K562 (cell line): ENCODE measurements at regions of chr5 and their contacts with region 1.

Region 1: DNA sequence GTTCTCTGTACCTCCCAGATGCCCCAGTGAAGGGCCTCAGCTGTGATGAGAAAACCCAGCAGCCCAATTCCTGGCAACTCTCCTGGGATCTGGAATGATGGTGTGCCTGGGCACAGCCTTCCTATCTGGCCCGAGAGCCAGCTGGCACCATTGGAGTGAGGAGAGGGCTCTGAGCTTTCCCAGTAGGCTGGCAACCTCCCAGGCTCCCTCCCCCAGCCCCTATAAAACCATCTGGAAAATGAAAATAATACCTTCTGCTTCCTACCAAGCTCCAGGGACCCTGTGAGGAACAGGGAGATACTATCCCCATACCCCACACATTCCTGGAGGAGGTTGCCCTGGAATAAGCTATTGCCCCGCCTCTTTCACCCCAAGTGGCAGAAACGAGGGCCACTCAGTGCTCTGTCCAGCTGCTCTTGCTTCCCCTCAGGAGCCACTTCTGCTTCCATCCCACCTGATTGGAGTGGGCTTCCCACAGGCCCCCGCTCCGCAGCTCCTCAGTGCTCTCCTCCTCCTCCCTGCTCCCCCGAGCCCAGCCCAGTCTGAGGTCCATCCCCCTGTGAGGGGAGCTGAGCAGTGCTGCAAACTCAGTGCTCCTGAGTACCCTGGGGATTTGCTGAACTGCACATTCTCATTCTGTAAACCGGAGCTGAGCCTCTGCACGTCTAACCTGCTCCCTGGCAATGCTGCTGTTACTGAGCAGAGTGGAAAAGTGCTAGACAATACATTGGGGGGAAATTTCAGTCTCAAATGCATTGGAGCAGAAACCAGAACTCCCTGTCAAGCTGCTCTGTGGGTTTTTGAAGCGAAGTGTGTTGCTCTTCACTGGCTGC is 74.7 kb downstream of the THBS4 start:
- DNase-seq: no peak
- ATAC-seq: 0 out of 3 replicates have a peak, but pooled peaks have one; percentile 26
- H3K4me3 ChIP-seq: no peak overlapping the region
- H3K27ac ChIP-seq: no peak overlapping the region
- H3K4me1 ChIP-seq: no peaks in the 10 kb centered on the region; a peak in 1 of 5 replicates
- H3K27me3 ChIP-seq: peaks cover 6 to 35% of the 10 kb centered on the region in 2 experiments; a peak in 3 of 5 replicates
- CTCF ChIP-seq: no peak
- EP300 ChIP-seq: no peak
- POLR2A ChIP-seq: no peak
- RAD21 ChIP-seq: no peak

Region 2: GRCh38 chr5:80069918-80070318 is 39.9 kb before region 1 on chr5:
- CTCF ChIA-PET with region 1: no interaction called
- POLR2A ChIA-PET with region 1: no interaction called
- in situ Hi-C with region 1: no loop called
- intact Hi-C with region 1: no loop called
- DNase-seq: no peak
- ATAC-seq: no peak
- H3K4me3 ChIP-seq: no peak overlapping the region
- H3K27ac ChIP-seq: no peak overlapping the region
- H3K4me1 ChIP-seq: no peaks in the 10 kb centered on the region
- H3K27me3 ChIP-seq: peaks cover 11 to 42% of the 10 kb centered on the region in 2 experiments
- CTCF ChIP-seq: no peak
- EP300 ChIP-seq: no peak
- POLR2A ChIP-seq: no peak
- RAD21 ChIP-seq: no peak

Region 3: GRCh38 chr5:81194633-81195333 is 1084.9 kb after region 1 on chr5:
- CTCF ChIA-PET with region 1: no interaction called
- POLR2A ChIA-PET with region 1: no interaction called
- in situ Hi-C with region 1: loop called (anchors 25 kb)
- intact Hi-C with region 1: no loop called
- DNase-seq: peak; percentile 87 to 88 (median 88)
- ATAC-seq: peak; percentile 100
- H3K4me3 ChIP-seq: no peak overlapping the region
- H3K27ac ChIP-seq: no peak overlapping the region
- H3K4me1 ChIP-seq: peaks cover 4% of the 10 kb centered on the region in 2 experiments; a peak in 4 of 5 replicates
- H3K27me3 ChIP-seq: peaks cover 18 to 42% of the 10 kb centered on the region in 2 experiments
- CTCF ChIP-seq: peak; percentile 93 to 95 (median 93)
- EP300 ChIP-seq: no peak
- POLR2A ChIP-seq: no peak
- RAD21 ChIP-seq: peak; percentile 92